ENCODE measurements at regions of chr19 and their contacts with region 1.

Region 1: DNA sequence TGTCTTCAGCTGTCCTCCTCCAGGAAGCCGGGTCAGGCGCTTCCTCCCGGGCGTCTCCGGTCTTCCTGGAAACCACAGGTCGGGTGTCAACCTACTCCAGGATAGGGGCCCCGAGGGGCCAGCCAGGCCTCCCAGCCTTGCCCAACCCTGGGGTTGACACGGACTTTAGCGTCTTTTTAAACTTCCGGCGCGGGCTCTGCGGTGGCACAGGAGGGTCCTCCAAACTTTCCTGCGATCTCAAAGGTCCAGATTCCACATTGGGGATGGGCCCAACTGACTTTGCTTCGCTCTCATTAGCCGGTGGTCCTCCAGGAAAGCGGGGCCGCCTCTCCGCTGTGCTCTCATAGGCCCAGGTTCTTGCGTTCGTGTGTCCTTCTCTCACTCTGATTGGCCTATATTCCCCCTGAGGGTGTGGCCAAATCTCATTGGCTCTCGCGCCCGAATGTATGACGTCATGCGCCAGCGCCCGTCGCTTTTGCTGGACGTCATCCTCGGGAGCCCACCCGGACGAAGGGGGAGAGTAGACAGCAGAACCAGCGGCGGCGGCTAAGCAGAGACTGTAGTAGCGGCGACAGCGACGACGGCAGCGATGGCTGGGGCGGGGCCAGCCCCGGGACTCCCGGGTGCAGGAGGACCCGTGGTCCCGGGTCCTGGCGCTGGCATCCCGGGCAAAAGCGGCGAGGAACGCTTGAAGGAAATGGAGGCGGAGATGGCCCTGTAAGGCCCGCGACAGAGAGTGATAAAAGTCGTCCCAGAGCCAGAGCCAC is at the start of gene RBM42:
- DNase-seq: peak; percentile 88 to 97 (median 96)
- H3K4me3 ChIP-seq: peak within 1 kb of the TSS; percentile 66 to 100 (median 98)
- H3K27ac ChIP-seq: peak within 1 kb of the TSS in 58 of 59 donors; percentile 48 to 95 (median 83)
- H3K27me3 ChIP-seq: no peaks in the 10 kb centered on the region
- CTCF ChIP-seq: peak in 13 of 56 donors; percentile 11 to 40 (median 22)
- total RNA-seq, gene RBM42: 36.6 to 66.9 (median 49.4) TPM

Region 2: GRCh38 chr19:35612559-35613321 is 16.0 kb before region 1 on chr19 and contains the start of gene HAUS5:
- intact Hi-C with region 1: loop called in 1 of 2 experiments (anchors 2 kb)
- DNase-seq: peak; percentile 89 to 96 (median 94)
- H3K4me3 ChIP-seq: peak within 1 kb of the TSS; percentile 55 to 95 (median 78)
- H3K27ac ChIP-seq: peak within 1 kb of the TSS in 39 of 59 donors; percentile 3 to 84 (median 54)
- H3K27me3 ChIP-seq: no peaks in the 10 kb centered on the region
- CTCF ChIP-seq: peak in 31 of 56 donors; percentile 6 to 60 (median 32)
- total RNA-seq, gene HAUS5: 5.1 to 22.1 (median 13.4) TPM

Region 3: GRCh38 chr19:35775298-35776110 is 146.8 kb after region 1 on chr19 and contains the start of gene ARHGAP33:
- intact Hi-C with region 1: no loop called
- DNase-seq: peak; percentile 99 to 100 (median 100)
- H3K4me3 ChIP-seq: peak within 1 kb of the TSS; percentile 62 to 98 (median 90)
- H3K27ac ChIP-seq: peak within 1 kb of the TSS in 53 of 59 donors; percentile 20 to 90 (median 82)
- H3K27me3 ChIP-seq: no peaks in the 10 kb centered on the region
- CTCF ChIP-seq: peak in 23 of 56 donors; percentile 7 to 50 (median 17)
- total RNA-seq, gene ARHGAP33: 53.2 to 121 (median 87.3) TPM

Region 4: GRCh38 chr19:35995048-35995993 is 366.6 kb after region 1 on chr19 and contains the start of gene SDHAF1:
- intact Hi-C with region 1: no loop called
- DNase-seq: peak; percentile 95 to 99 (median 98)
- H3K4me3 ChIP-seq: peak within 1 kb of the TSS; percentile 65 to 99 (median 90)
- H3K27ac ChIP-seq: peak within 1 kb of the TSS in 55 of 59 donors; percentile 24 to 91 (median 75)
- H3K27me3 ChIP-seq: no peaks in the 10 kb centered on the region
- CTCF ChIP-seq: peak in 31 of 56 donors; percentile 17 to 56 (median 28)
- total RNA-seq, gene SDHAF1: 13.8 to 31.6 (median 21.0) TPM

Measured in dorsolateral prefrontal cortex (tissue), 120 donors.